Activated naive CD8-positive, alpha-beta T cell treated with anti-CD3 and anti-CD28 coated beads, Interleukin-2, amount 10 ng/mL, durations not matched to agents 7 days and 5 days (primary cell): ENCODE measurements at regions of chr19 and their contacts with region 1.

Region 1: DNA sequence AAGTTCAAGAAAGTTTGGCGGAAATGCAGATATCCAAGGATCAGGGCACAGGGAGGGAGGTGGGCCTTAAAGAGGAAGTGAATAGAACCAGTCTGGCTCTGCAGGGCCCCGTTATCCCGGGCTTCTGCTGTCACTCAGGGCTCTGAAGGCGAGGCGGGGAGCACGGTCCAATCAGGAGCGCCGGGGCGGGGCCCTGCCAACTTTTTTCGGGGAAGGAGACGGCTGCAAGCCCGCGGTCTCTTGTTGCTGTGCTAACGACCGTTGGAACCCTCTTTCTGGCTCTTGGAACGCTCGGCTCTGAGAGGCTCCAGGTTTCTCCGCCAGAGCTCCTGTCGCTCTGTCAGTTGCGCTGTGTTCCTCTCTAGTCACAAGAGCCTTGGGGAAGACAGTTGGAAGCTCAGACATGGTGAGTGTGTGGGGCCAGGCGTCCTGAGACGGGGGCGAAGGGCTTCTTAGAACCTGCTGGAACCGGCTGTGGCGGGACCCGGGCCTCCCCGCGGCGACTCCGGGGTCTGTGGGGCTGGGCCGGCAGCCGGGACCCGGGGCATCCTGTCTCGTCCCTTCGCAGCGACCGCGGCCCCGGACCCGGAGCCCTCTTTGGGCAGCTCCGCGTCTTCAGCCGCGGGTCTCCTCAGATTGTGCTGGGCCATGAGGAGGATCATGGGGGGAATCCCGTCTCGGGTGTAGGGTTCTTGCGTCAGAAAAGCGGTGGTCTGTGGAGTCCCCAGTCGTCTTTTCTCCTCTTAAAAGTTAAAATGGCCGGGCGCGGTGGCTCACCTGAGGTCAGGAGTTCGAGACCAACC is 27.7 kb downstream of the ZNF844 start:
- DNase-seq: peak; percentile 81
- ATAC-seq: peak; percentile 94
- H3K4me3 Mint-ChIP-seq: peak overlapping the region; percentile 88
- H3K27ac Mint-ChIP-seq: peak overlapping the region; percentile 87
- H3K4me1 Mint-ChIP-seq: peaks cover 6% of the 10 kb centered on the region
- H3K27me3 Mint-ChIP-seq: no peaks in the 10 kb centered on the region

Region 2: GRCh38 chr19:12139885-12140547 is 47.8 kb after region 1 on chr19 and contains the start of gene ZNF20:
- POLR2A ChIA-PET with region 1: interaction called, 13 read pairs
- DNase-seq: peak; percentile 90
- ATAC-seq: peak; percentile 91
- H3K4me3 Mint-ChIP-seq: peak within 1 kb of the TSS; percentile 94
- H3K27ac Mint-ChIP-seq: peak within 1 kb of the TSS; percentile 67
- H3K4me1 Mint-ChIP-seq: peaks cover 23% of the 10 kb centered on the region
- H3K27me3 Mint-ChIP-seq: no peaks in the 10 kb centered on the region
- total RNA-seq, gene ZNF20: 5.9 to 7.2 TPM

Region 3: GRCh38 chr19:12194827-12195731 is 102.8 kb after region 1 on chr19:
- POLR2A ChIA-PET with region 1: no interaction called
- DNase-seq: peak; percentile 64
- ATAC-seq: peak; percentile 54
- H3K4me3 Mint-ChIP-seq: peak overlapping the region; percentile 79
- H3K27ac Mint-ChIP-seq: peak overlapping the region; percentile 70
- H3K4me1 Mint-ChIP-seq: peaks cover 11% of the 10 kb centered on the region
- H3K27me3 Mint-ChIP-seq: no peaks in the 10 kb centered on the region